Caco-2 (cell line): ENCODE measurements at regions of chr5 and their contacts with region 1.

Region 1: GRCh38 chr5:40879163-40879942 is 29.9 kb upstream of the C7 start:
- DNase-seq: no peak
- H3K4me3 ChIP-seq: no peak overlapping the region
- H3K4me3 Mint-ChIP-seq: no peak overlapping the region
- H3K27ac Mint-ChIP-seq: no peak overlapping the region
- H3K4me1 ChIP-seq: no peaks in the 10 kb centered on the region
- H3K4me1 Mint-ChIP-seq: no peaks in the 10 kb centered on the region
- H3K27me3 ChIP-seq: no peaks in the 10 kb centered on the region
- H3K27me3 Mint-ChIP-seq: no peaks in the 10 kb centered on the region
- CTCF ChIP-seq: no peak

Region 2: GRCh38 chr5:39714036-39714698 is 1165.2 kb before region 1 on chr5:
- CTCF ChIA-PET with region 1: no interaction called
- POLR2A ChIA-PET with region 1: no interaction called
- intact Hi-C with region 1: loop called (anchors 10 kb)
- DNase-seq: peak; percentile 43 to 56
- H3K4me3 ChIP-seq: no peak overlapping the region
- H3K4me3 Mint-ChIP-seq: no peak overlapping the region
- H3K27ac Mint-ChIP-seq: no peak overlapping the region
- H3K4me1 ChIP-seq: no peaks in the 10 kb centered on the region
- H3K4me1 Mint-ChIP-seq: peaks cover 10% of the 10 kb centered on the region
- H3K27me3 ChIP-seq: no peaks in the 10 kb centered on the region
- H3K27me3 Mint-ChIP-seq: peaks cover 2% of the 10 kb centered on the region
- CTCF ChIP-seq: peak; percentile 67

Region 3: DNA sequence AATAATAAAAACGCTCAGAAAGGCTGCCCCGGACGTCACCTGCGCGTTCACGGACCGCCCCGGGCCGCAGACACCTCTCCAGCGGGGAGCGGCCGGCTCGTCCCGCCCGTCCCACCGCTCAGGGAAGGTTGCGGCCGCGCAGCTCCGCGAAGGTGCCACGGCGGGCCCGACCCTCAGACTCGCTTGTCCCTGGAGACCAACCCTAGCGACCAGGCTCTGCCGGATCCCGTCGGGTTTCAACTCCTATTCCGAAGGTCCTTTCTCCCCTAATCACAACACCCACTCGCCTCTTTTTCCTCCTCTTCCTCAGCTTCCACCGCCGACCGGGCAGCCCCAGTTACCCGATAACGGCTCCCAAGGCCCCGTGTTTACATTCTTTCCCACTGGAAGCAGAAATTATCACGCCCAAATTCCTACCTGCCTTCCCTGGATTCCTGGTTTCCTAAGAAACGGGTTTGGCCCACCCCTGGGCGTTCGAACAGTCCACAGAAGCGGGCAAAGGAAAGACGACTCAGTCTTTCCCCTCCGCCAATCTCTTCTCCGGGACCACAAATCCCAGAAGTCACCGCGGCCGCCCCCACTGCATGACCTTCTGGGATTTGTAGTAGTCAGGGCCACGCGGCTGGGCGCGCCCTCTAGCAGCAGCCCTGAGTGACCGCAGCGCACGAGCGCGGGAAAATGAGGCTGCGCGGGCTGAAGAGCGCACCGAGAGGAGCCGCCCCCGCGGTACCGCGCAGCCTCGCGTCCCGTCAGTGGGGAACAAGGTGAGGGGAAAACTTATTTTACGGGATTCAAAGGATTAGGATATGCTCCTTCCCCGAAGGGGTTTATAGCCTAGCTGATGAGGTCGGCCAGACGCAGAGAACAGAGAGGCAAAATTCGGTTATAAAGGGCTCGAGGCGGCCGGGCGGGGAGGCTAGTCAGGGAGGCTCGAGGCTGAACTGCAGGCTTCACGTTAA is 123.7 kb before region 1 on chr5 and contains the start of gene TTC33:
- CTCF ChIA-PET with region 1: no interaction called
- POLR2A ChIA-PET with region 1: no interaction called
- intact Hi-C with region 1: loop called (anchors 1 kb)
- DNase-seq: peak; percentile 95 to 96
- H3K4me3 ChIP-seq: peak within 1 kb of the TSS; percentile 56
- H3K4me3 Mint-ChIP-seq: no peak within 1 kb of the TSS
- H3K27ac Mint-ChIP-seq: no peak within 1 kb of the TSS
- H3K4me1 ChIP-seq: peaks cover 8% of the 10 kb centered on the region; the same call in 1 of the 2 replicates
- H3K4me1 Mint-ChIP-seq: no peaks in the 10 kb centered on the region
- H3K27me3 ChIP-seq: no peaks in the 10 kb centered on the region
- H3K27me3 Mint-ChIP-seq: no peaks in the 10 kb centered on the region
- CTCF ChIP-seq: peak; percentile 55 to 89
- total RNA-seq, gene TTC33: 8.6 and 10.4 TPM in 2 replicates

Region 4: GRCh38 chr5:40775846-40776657 is 103.3 kb before region 1 on chr5:
- CTCF ChIA-PET with region 1: no interaction called
- POLR2A ChIA-PET with region 1: no interaction called
- intact Hi-C with region 1: loop called (anchors 1 kb)
- DNase-seq: no peak
- H3K4me3 ChIP-seq: no peak overlapping the region
- H3K4me3 Mint-ChIP-seq: no peak overlapping the region
- H3K27ac Mint-ChIP-seq: peak overlapping the region; percentile 44
- H3K4me1 ChIP-seq: peaks cover 19% of the 10 kb centered on the region
- H3K4me1 Mint-ChIP-seq: peaks cover 18% of the 10 kb centered on the region
- H3K27me3 ChIP-seq: no peaks in the 10 kb centered on the region
- H3K27me3 Mint-ChIP-seq: no peaks in the 10 kb centered on the region
- CTCF ChIP-seq: no peak

Region 5: GRCh38 chr5:40798012-40798855 is 81.1 kb before region 1 on chr5 and contains the start of gene PRKAA1:
- CTCF ChIA-PET with region 1: no interaction called
- POLR2A ChIA-PET with region 1: no interaction called
- intact Hi-C with region 1: loop called (anchors 1 kb)
- DNase-seq: peak; percentile 86 to 95
- H3K4me3 ChIP-seq: peak within 1 kb of the TSS; percentile 67
- H3K4me3 Mint-ChIP-seq: peak within 1 kb of the TSS; percentile 89
- H3K27ac Mint-ChIP-seq: peak within 1 kb of the TSS; percentile 86
- H3K4me1 ChIP-seq: peaks cover 21% of the 10 kb centered on the region
- H3K4me1 Mint-ChIP-seq: peaks cover 25% of the 10 kb centered on the region
- H3K27me3 ChIP-seq: no peaks in the 10 kb centered on the region
- H3K27me3 Mint-ChIP-seq: no peaks in the 10 kb centered on the region
- CTCF ChIP-seq: peak; percentile 77 to 90
- total RNA-seq, gene PRKAA1: 64.6 and 69.2 TPM in 2 replicates

Region 6: GRCh38 chr5:40834849-40835787 is 44.2 kb before region 1 on chr5 and contains the start of gene RPL37:
- CTCF ChIA-PET with region 1: no interaction called
- POLR2A ChIA-PET with region 1: no interaction called
- intact Hi-C with region 1: loop called (anchors 1 kb)
- DNase-seq: peak; percentile 95 to 97
- H3K4me3 ChIP-seq: peak within 1 kb of the TSS; percentile 64
- H3K4me3 Mint-ChIP-seq: peak within 1 kb of the TSS; percentile 99
- H3K27ac Mint-ChIP-seq: peak within 1 kb of the TSS; percentile 98
- H3K4me1 ChIP-seq: peaks cover 18% of the 10 kb centered on the region
- H3K4me1 Mint-ChIP-seq: peaks cover 8% of the 10 kb centered on the region
- H3K27me3 ChIP-seq: no peaks in the 10 kb centered on the region
- H3K27me3 Mint-ChIP-seq: no peaks in the 10 kb centered on the region
- CTCF ChIP-seq: no peak
- total RNA-seq, gene RPL37: 1,699 and 1,723 TPM in 2 replicates

Region 7: GRCh38 chr5:40866291-40866690 is 13.1 kb before region 1 on chr5:
- CTCF ChIA-PET with region 1: no interaction called
- POLR2A ChIA-PET with region 1: no interaction called
- intact Hi-C with region 1: no loop called
- DNase-seq: no peak
- H3K4me3 ChIP-seq: no peak overlapping the region
- H3K4me3 Mint-ChIP-seq: no peak overlapping the region
- H3K27ac Mint-ChIP-seq: no peak overlapping the region
- H3K4me1 ChIP-seq: peaks cover 4% of the 10 kb centered on the region; the same call in 1 of the 2 replicates
- H3K4me1 Mint-ChIP-seq: no peaks in the 10 kb centered on the region
- H3K27me3 ChIP-seq: no peaks in the 10 kb centered on the region
- H3K27me3 Mint-ChIP-seq: no peaks in the 10 kb centered on the region
- CTCF ChIP-seq: no peak